Heart right ventricle (tissue), 16 donors: ENCODE measurements at regions of chr17 and their contacts with region 1.

Region 1: DNA sequence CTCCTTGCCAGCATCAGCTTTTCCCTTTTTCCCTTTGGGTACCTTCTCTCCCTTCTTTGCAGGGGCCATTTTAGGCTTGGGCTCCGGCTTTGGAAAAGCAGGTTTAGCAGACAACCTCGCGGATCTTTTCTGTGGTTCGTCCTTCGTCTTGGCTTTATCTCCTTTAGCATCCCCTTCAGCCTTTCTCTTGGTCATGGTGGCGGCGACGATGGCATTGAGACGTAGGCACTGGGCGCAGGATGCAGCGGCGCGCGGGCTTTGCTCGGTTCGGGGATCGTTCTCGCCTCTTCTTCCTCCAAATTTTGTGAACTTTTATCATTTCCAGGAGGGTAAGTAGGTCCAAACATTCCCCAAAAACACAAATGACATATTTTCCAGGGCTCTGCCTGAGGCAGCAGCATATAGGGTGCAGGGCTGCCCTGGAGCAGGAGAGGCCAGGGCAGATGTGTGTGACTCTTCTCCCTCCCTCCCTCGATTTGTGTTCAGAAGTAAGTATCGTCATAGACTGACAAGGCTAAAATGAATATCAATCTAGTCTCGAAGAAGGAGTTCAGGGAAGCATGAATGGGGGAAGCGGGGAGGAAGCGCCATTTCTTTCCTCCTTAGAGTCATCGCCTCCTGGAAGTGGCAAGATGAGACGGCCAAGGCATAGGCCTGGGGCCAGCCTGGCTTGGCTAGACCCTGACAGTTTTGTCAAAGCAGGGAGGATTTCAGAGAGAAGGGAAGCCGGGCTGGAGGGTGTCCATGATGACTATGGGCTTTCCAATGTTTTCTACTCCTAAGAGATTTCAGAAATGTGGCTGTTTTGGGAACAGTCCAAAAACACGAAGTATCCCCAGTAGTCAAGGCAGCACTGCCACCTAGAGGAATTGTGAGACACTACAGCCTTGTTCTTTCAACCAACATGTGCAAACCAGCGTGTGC is 13.2 kb downstream of the CHCT1 start:
- DNase-seq: peak; percentile 48 to 85
- ATAC-seq: peak; percentile 71 to 94 (median 88)
- H3K4me3 ChIP-seq: peak overlapping the region in 3 of 10 donors; percentile 12 to 19 (median 18)
- H3K27ac ChIP-seq: peak overlapping the region in 5 of 10 donors; percentile 2 to 57 (median 12)
- H3K4me1 ChIP-seq: peaks cover 0 to 10% (median 4%) of the 10 kb centered on the region in 9 donors
- H3K27me3 ChIP-seq: peaks cover 0 to 6% (median 0%) of the 10 kb centered on the region in 7 donors
- CTCF ChIP-seq: peak; percentile 83 to 95 (median 92)

Region 2: DNA sequence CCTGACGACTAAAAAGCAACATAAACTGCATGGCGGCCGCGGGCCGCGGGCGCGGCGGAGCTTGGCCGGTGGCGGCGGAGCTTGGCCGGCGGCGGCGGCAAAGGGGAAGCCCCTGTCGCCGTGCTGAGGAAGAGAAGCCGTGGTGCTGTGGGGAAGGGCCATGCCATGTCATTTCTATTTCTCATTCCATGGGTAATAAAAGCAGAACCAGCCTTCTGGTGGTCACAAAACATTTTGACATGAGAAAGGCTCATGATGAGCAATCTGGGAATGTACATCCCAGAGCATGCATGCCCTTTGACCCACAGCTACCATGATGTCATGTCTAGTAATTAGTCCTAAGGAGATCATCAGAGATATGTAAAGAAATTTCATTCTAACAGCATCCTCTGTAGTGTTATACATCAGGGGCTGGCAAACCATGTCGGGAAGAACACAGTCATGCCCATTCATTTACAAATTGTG is 332.8 kb before region 1 on chr17:
- intact Hi-C with region 1: loop called in 5 of 10 experiments (anchors 10 kb)
- DNase-seq: peak in 1 of 2 donors; percentile 29
- ATAC-seq: peak in 6 of 8 donors; percentile 52 to 81 (median 70)
- H3K4me3 ChIP-seq: peak overlapping the region in 9 of 10 donors; percentile 16 to 45 (median 34)
- H3K27ac ChIP-seq: peak overlapping the region in 4 of 10 donors; percentile 45 to 60 (median 53)
- H3K4me1 ChIP-seq: peaks cover 0 to 17% (median 0%) of the 10 kb centered on the region in 9 donors
- H3K27me3 ChIP-seq: no peaks in the 10 kb centered on the region
- CTCF ChIP-seq: no peak

Region 3: GRCh38 chr17:60142872-60143499 is 292.5 kb before region 1 on chr17:
- intact Hi-C with region 1: loop called in 3 of 10 experiments (anchors 10 kb)
- DNase-seq: peak; percentile 82 to 89
- ATAC-seq: peak; percentile 59 to 91 (median 80)
- H3K4me3 ChIP-seq: peak overlapping the region in 5 of 10 donors; percentile 0 to 23 (median 14)
- H3K27ac ChIP-seq: peak overlapping the region in 8 of 10 donors; percentile 24 to 63 (median 42)
- H3K4me1 ChIP-seq: peaks cover 0 to 73% (median 49%) of the 10 kb centered on the region in 9 donors
- H3K27me3 ChIP-seq: peaks cover 30 to 86% (median 74%) of the 10 kb centered on the region in 7 donors
- CTCF ChIP-seq: peak; percentile 55 to 87 (median 77)

Region 4: GRCh38 chr17:60231234-60231633 is 204.3 kb before region 1 on chr17:
- intact Hi-C with region 1: loop called in 6 of 10 experiments (anchors 5 to 10 kb)
- DNase-seq: no peak
- ATAC-seq: peak in 1 of 8 donors; percentile 58
- H3K4me3 ChIP-seq: no peak overlapping the region
- H3K27ac ChIP-seq: no peak overlapping the region
- H3K4me1 ChIP-seq: no peaks in the 10 kb centered on the region
- H3K27me3 ChIP-seq: no peaks in the 10 kb centered on the region
- CTCF ChIP-seq: peak in 8 of 9 donors; percentile 6 to 51 (median 44)